ENCODE measurements at regions of chr3 and their contacts with region 1.

Region 1: GRCh38 chr3:124559881-124560574 is 170.2 kb upstream of the UMPS start:
- DNase-seq: peak; percentile 26 to 43
- ATAC-seq: peak; percentile 73 to 77
- H3K4me3 ChIP-seq: no peak overlapping the region
- H3K27ac ChIP-seq: no peak overlapping the region
- H3K4me1 ChIP-seq: peaks cover 7 to 9% of the 10 kb centered on the region in 2 donors
- H3K27me3 ChIP-seq: no peaks in the 10 kb centered on the region
- CTCF ChIP-seq: peak; percentile 60 to 92 (median 74)
- POLR2A ChIP-seq: no peak

Region 2: GRCh38 chr3:124014366-124014942 is 545.6 kb before region 1 on chr3:
- in situ Hi-C with region 1: no loop called
- intact Hi-C with region 1: loop called (anchors 5 kb)
- DNase-seq: no peak
- ATAC-seq: no peak
- H3K4me3 ChIP-seq: no peak overlapping the region
- H3K27ac ChIP-seq: no peak overlapping the region
- H3K4me1 ChIP-seq: no peaks in the 10 kb centered on the region
- H3K27me3 ChIP-seq: no peaks in the 10 kb centered on the region
- CTCF ChIP-seq: no peak
- POLR2A ChIP-seq: no peak

Region 3: GRCh38 chr3:124451630-124452317 is 108.3 kb before region 1 on chr3:
- in situ Hi-C with region 1: no loop called
- intact Hi-C with region 1: no loop called
- DNase-seq: no peak
- ATAC-seq: no peak
- H3K4me3 ChIP-seq: no peak overlapping the region
- H3K27ac ChIP-seq: no peak overlapping the region
- H3K4me1 ChIP-seq: no peaks in the 10 kb centered on the region
- H3K27me3 ChIP-seq: no peaks in the 10 kb centered on the region
- CTCF ChIP-seq: no peak
- POLR2A ChIP-seq: no peak

Region 4: GRCh38 chr3:124492811-124493210 is 67.2 kb before region 1 on chr3:
- in situ Hi-C with region 1: no loop called
- intact Hi-C with region 1: loop called (anchors 2 kb)
- DNase-seq: peak in 1 of 2 donors; percentile 21
- ATAC-seq: peak; percentile 65 to 78
- H3K4me3 ChIP-seq: no peak overlapping the region
- H3K27ac ChIP-seq: no peak overlapping the region
- H3K4me1 ChIP-seq: no peaks in the 10 kb centered on the region
- H3K27me3 ChIP-seq: no peaks in the 10 kb centered on the region
- CTCF ChIP-seq: peak in 2 of 5 experiments; percentile 20 to 43
- POLR2A ChIP-seq: no peak

Region 5: DNA sequence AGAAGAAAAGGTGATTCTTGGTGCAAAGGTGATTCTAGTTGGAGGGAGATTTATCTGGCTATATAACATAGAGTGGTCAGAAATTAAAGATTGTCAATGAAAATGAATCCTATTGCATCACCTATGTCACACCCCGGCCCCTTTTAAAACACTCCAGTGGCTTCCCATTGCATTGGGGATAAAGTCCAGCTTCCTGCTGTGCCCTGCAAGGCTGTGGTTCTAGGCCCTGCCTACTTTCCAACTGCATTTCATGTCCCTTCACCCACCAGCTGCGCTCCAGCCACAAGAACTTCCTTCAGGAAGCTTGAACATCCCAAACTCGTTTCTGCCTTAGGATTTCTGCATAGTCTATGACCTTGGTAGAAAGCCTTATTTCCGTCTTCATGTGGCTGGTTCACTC is 51.5 kb after region 1 on chr3:
- in situ Hi-C with region 1: no loop called
- intact Hi-C with region 1: loop called (anchors 5 kb)
- DNase-seq: no peak
- ATAC-seq: no peak
- H3K4me3 ChIP-seq: no peak overlapping the region
- H3K27ac ChIP-seq: no peak overlapping the region
- H3K4me1 ChIP-seq: peaks cover 31 to 38% of the 10 kb centered on the region in 2 donors
- H3K27me3 ChIP-seq: no peaks in the 10 kb centered on the region
- CTCF ChIP-seq: no peak
- POLR2A ChIP-seq: no peak

Region 6: GRCh38 chr3:124680521-124680920 is 120.5 kb after region 1 on chr3:
- in situ Hi-C with region 1: loop called in 3 of 4 experiments (anchors 5 kb)
- intact Hi-C with region 1: no loop called
- DNase-seq: no peak
- ATAC-seq: no peak
- H3K4me3 ChIP-seq: no peak overlapping the region
- H3K27ac ChIP-seq: no peak overlapping the region
- H3K4me1 ChIP-seq: peaks cover 0 to 6% of the 10 kb centered on the region in 2 donors
- H3K27me3 ChIP-seq: no peaks in the 10 kb centered on the region
- CTCF ChIP-seq: no peak
- POLR2A ChIP-seq: no peak

Region 7: DNA sequence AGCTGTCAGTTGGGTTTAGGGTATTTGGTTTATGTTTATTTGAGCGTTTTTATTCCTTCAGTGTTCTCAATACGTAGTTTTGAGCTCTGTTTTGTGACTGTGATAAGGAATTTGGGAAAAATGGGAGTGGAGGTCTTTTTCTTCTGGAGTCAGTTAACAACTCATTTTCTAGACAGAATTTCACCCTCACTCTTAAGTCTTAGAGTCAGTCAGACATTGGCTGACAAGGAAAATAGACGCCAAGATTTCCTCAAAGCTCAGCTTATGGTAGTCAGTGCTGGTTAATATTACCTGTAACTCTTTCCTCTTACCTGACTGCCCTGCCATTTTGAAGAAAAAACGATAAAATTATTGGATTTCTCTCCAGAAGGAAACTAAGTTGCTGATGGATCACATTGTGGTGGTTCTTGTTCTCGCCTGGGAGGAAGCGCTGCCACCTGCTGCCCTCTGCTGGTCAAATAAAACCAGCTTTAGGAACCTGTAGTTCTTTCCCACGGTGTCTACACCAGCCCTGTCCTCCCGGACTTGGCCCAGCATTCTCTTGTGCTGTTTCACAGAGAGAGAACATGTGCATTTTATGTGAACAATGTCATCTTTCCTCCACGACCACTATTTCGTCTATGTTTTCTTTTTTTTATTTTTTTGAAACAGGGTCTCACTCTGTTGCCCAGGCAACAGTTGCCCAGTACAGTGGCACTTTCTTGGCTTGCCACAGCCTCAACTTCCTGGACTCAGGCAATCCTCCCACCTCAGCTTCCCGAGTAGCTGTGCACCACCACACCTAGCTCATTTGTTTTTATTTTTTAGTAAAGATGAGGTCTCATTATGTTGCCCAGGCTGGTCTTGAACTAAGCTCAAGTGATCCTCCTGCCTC is 128.8 kb after region 1 on chr3:
- in situ Hi-C with region 1: loop called in 3 of 4 experiments (anchors 5 kb)
- intact Hi-C with region 1: loop called (anchors 1 kb)
- DNase-seq: peak; percentile 45 to 69
- ATAC-seq: peak; percentile 89 to 93
- H3K4me3 ChIP-seq: no peak overlapping the region
- H3K27ac ChIP-seq: no peak overlapping the region
- H3K4me1 ChIP-seq: peaks cover 0 to 6% of the 10 kb centered on the region in 2 donors
- H3K27me3 ChIP-seq: no peaks in the 10 kb centered on the region
- CTCF ChIP-seq: peak; percentile 69 to 89 (median 80)
- POLR2A ChIP-seq: no peak